H1 (cell line): ENCODE measurements at regions of chr7 and their contacts with region 1.

Region 1: DNA sequence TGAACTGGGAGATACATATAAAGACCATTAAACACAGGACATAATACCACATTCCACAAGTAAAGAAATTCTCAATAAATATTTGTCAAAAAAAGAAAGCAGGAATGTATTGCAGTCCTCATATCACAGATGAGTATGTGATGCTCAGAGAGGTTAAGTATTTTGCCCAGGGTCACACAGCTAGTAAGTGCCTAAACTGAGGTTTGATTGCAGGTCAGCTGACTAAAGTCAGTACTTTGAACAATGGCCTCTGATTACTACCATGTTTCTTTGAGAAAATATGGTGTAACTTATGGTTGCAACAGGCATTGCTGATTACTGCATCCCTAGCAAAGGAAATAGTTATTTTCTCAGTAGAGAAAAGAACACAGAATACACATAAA is 267.1 kb downstream of the ELMO1 start:
- DNase-seq: no peak
- H3K4me3 ChIP-seq: no peak overlapping the region
- H3K27ac ChIP-seq: no peak overlapping the region
- H3K4me1 ChIP-seq: no peaks in the 10 kb centered on the region; a peak in 2 of 7 replicates
- H3K27me3 ChIP-seq: no peaks in the 10 kb centered on the region
- CTCF ChIP-seq: no peak
- EP300 ChIP-seq: no peak
- POLR2A ChIP-seq: no peak
- RAD21 ChIP-seq: no peak

Region 2: DNA sequence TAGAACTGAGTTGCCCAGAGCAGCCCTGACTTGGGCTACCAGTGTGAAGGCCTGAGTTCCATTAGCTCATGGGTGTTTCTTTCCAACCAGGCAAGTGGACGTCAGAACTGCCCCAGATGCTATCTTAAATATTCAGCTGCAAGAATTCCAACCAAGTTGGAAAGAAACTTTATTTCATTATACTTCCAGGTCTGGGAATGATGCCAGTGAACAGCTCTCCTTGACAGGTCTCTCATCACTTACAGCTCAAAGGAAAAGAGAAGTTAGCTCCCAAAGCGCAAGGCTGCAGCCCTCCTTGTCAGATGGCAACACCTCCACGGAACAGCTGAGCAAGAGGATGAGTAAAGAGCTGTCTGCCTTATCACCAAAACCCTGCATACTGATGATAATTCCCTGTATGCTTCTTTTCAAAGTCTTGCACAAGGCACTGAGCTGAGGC is 201.7 kb before region 1 on chr7:
- CTCF ChIA-PET with region 1: interaction called, 48 read pairs
- POLR2A ChIA-PET with region 1: no interaction called
- DNase-seq: no peak
- H3K4me3 ChIP-seq: no peak overlapping the region
- H3K27ac ChIP-seq: no peak overlapping the region
- H3K4me1 ChIP-seq: peaks cover 0 to 2% (median 0%) of the 10 kb centered on the region in 4 experiments; a peak in 1 of 7 replicates
- H3K27me3 ChIP-seq: no peaks in the 10 kb centered on the region
- CTCF ChIP-seq: no peak
- EP300 ChIP-seq: no peak
- POLR2A ChIP-seq: no peak
- RAD21 ChIP-seq: no peak

Region 3: GRCh38 chr7:37016064-37016878 is 165.3 kb before region 1 on chr7:
- CTCF ChIA-PET with region 1: interaction called, 10 read pairs
- POLR2A ChIA-PET with region 1: no interaction called
- DNase-seq: no peak
- H3K4me3 ChIP-seq: no peak overlapping the region
- H3K27ac ChIP-seq: no peak overlapping the region
- H3K4me1 ChIP-seq: no peaks in the 10 kb centered on the region
- H3K27me3 ChIP-seq: no peaks in the 10 kb centered on the region
- CTCF ChIP-seq: no peak
- EP300 ChIP-seq: no peak
- POLR2A ChIP-seq: no peak
- RAD21 ChIP-seq: no peak

Region 4: DNA sequence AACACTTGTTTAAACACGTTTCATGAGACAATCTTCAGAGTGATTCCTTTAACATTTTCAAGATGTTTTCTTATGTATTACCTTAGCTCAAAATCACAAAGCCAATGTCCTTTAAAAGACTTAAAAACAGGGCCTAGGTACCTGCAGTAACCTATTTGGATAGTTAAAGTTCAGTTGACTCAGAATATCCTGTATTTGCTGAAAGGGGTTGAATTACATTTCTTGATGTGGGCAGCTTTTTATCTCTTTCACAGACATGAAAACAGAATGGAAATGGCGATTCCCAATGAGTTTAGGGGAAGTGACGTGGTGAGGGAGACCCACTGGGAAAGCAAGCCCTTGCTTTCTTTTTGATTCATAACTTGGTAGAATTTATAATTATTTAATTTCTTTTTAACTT is 132.9 kb before region 1 on chr7:
- CTCF ChIA-PET with region 1: interaction called, 11 read pairs
- POLR2A ChIA-PET with region 1: no interaction called
- DNase-seq: no peak
- H3K4me3 ChIP-seq: no peak overlapping the region
- H3K27ac ChIP-seq: no peak overlapping the region
- H3K4me1 ChIP-seq: peaks cover 2 to 6% (median 3%) of the 10 kb centered on the region in 4 experiments; a peak in 4 of 7 replicates
- H3K27me3 ChIP-seq: no peaks in the 10 kb centered on the region
- CTCF ChIP-seq: no peak
- EP300 ChIP-seq: no peak
- POLR2A ChIP-seq: no peak
- RAD21 ChIP-seq: no peak

Region 5: GRCh38 chr7:37100735-37101331 is 80.7 kb before region 1 on chr7:
- CTCF ChIA-PET with region 1: interaction called, 42 read pairs
- POLR2A ChIA-PET with region 1: no interaction called
- DNase-seq: no peak
- H3K4me3 ChIP-seq: no peak overlapping the region
- H3K27ac ChIP-seq: no peak overlapping the region
- H3K4me1 ChIP-seq: peaks cover 0 to 3% (median under 1%) of the 10 kb centered on the region in 4 experiments; a peak in 1 of 7 replicates
- H3K27me3 ChIP-seq: no peaks in the 10 kb centered on the region
- CTCF ChIP-seq: no peak
- EP300 ChIP-seq: no peak
- POLR2A ChIP-seq: no peak
- RAD21 ChIP-seq: no peak